ENCODE measurements at regions of chr5 and their contacts with region 1.

Region 1: GRCh38 chr5:159915904-159916840 is at the start of gene ADRA1B:
- DNase-seq: peak; percentile 31
- H3K4me3 ChIP-seq: peak within 1 kb of the TSS; percentile 29 to 36
- H3K27ac ChIP-seq: no peak within 1 kb of the TSS
- H3K4me1 ChIP-seq: no peaks in the 10 kb centered on the region
- H3K27me3 ChIP-seq: no peaks in the 10 kb centered on the region
- CTCF ChIP-seq: peak; percentile 31 to 65 (median 46)
- POLR2A ChIP-seq: no peak
- total RNA-seq, gene ADRA1B: 0.14 to 0.74 TPM

Region 2: GRCh38 chr5:159444441-159445082 is 471.6 kb before region 1 on chr5:
- intact Hi-C with region 1: loop called (anchors 2 kb)
- DNase-seq: peak; percentile 28
- H3K4me3 ChIP-seq: no peak overlapping the region
- H3K27ac ChIP-seq: no peak overlapping the region
- H3K4me1 ChIP-seq: no peaks in the 10 kb centered on the region
- H3K27me3 ChIP-seq: no peaks in the 10 kb centered on the region
- CTCF ChIP-seq: peak in 3 of 4 experiments; percentile 60 to 66 (median 62)
- POLR2A ChIP-seq: no peak

Region 3: GRCh38 chr5:159451197-159452052 is 464.7 kb before region 1 on chr5:
- intact Hi-C with region 1: loop called (anchors 2 kb)
- DNase-seq: no peak
- H3K4me3 ChIP-seq: no peak overlapping the region
- H3K27ac ChIP-seq: no peak overlapping the region
- H3K4me1 ChIP-seq: no peaks in the 10 kb centered on the region
- H3K27me3 ChIP-seq: peaks cover 2% of the 10 kb centered on the region
- CTCF ChIP-seq: no peak
- POLR2A ChIP-seq: no peak

Region 4: DNA sequence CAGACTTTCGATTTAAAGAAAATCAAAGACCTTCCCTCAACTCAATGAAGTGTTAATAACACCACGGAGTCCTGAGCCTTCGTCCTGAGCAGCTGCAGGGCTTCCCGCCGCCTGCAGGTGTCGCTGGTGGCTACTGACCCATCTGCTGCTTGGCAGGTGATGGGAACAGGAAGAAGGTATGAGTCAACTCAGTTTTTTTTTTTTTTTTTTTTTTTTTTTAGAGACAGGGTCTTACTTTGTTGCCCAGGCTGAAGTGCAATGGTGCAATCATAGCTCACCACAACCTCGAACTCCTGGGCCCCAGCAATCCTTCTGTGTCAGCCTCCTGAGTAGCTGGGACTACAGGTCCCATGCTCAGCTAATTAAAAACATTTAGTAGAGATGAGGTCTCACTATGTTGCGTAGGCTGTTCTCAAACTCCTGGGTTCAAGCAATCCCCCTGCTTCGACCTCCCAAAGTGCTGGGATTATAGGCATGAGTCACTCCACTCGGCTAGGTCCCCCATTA is 400.2 kb before region 1 on chr5:
- intact Hi-C with region 1: loop called (anchors 5 kb)
- DNase-seq: peak; percentile 24
- H3K4me3 ChIP-seq: no peak overlapping the region
- H3K27ac ChIP-seq: no peak overlapping the region
- H3K4me1 ChIP-seq: peaks cover 21% of the 10 kb centered on the region
- H3K27me3 ChIP-seq: no peaks in the 10 kb centered on the region
- CTCF ChIP-seq: peak; percentile 18 to 76 (median 50)
- POLR2A ChIP-seq: no peak

Region 5: GRCh38 chr5:159539678-159540077 is 376.5 kb before region 1 on chr5:
- intact Hi-C with region 1: loop called (anchors 5 kb)
- DNase-seq: no peak
- H3K4me3 ChIP-seq: no peak overlapping the region
- H3K27ac ChIP-seq: no peak overlapping the region
- H3K4me1 ChIP-seq: no peaks in the 10 kb centered on the region
- H3K27me3 ChIP-seq: no peaks in the 10 kb centered on the region
- CTCF ChIP-seq: no peak
- POLR2A ChIP-seq: no peak

Region 6: GRCh38 chr5:159782197-159782994 is 133.8 kb before region 1 on chr5:
- intact Hi-C with region 1: loop called (anchors 5 kb)
- DNase-seq: no peak
- H3K4me3 ChIP-seq: no peak overlapping the region
- H3K27ac ChIP-seq: no peak overlapping the region
- H3K4me1 ChIP-seq: no peaks in the 10 kb centered on the region
- H3K27me3 ChIP-seq: no peaks in the 10 kb centered on the region
- CTCF ChIP-seq: no peak
- POLR2A ChIP-seq: no peak